Mucosa of descending colon (tissue), 3 donors: ENCODE measurements at regions of chr10 and their contacts with region 1.

Region 1: GRCh38 chr10:71766702-71767419 is 6.5 kb downstream of the VSIR start:
- DNase-seq: peak; percentile 91 to 95 (median 95)
- ATAC-seq: peak; percentile 87
- H3K4me3 ChIP-seq: no peak overlapping the region
- H3K4me1 ChIP-seq: peaks cover 58% of the 10 kb centered on the region
- CTCF ChIP-seq: no peak

Region 2: DNA sequence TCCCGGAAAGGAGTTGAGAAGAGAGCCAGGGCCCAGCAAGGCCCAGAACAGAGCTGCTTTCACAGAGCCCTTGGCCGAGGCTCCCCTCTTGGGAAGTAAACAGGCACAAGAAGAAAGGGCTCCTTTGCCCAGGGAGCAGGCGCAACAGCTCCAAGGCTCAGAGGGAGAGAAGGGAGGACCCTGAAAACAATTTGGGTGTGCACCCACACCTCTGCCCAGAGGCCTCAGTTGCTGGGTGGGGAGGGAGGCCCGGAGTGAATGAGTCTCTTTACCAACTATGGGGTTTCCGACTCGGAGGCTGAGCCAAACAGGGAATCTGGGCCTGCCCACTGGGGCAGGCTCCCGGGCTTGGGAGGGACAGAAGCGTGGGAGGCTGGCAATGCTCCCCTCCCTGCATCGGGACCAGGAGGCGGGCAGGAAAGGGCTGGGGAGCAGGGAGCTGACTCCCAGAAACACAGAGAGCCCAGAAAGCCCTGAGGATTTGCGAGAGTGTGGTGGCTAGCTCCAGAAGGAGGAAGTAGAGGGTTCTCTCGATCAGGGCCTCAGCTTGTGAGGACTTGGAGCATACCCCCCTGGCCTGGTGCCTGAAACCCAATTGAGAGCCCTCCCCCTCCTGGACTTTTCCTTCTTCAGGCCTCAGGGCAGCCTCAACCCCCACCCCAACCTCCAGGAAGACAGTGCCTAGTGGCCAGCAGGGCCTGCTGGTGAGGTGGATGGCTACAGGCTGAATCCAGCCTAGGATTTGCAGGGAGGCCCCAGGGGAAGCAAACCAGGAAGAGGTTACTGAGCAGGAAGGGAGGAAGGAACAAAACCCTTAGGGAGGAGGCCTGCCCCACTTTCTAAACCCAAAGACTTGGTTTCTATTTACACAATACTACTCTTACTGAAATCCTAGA is 53.5 kb before region 1 on chr10:
- intact Hi-C with region 1: loop called in 1 of 2 experiments (anchors 10 kb)
- DNase-seq: peak in 2 of 3 donors; percentile 62 to 70
- ATAC-seq: peak; percentile 70
- H3K4me3 ChIP-seq: no peak overlapping the region
- H3K4me1 ChIP-seq: peaks cover 22% of the 10 kb centered on the region
- CTCF ChIP-seq: no peak